Posterior vena cava (tissue), 2 donors: ENCODE measurements at regions of chr7 and their contacts with region 1.

Region 1: GRCh38 chr7:92149736-92150239 is 15.5 kb upstream of the CYP51A1 start:
- DNase-seq: no peak

Region 2: DNA sequence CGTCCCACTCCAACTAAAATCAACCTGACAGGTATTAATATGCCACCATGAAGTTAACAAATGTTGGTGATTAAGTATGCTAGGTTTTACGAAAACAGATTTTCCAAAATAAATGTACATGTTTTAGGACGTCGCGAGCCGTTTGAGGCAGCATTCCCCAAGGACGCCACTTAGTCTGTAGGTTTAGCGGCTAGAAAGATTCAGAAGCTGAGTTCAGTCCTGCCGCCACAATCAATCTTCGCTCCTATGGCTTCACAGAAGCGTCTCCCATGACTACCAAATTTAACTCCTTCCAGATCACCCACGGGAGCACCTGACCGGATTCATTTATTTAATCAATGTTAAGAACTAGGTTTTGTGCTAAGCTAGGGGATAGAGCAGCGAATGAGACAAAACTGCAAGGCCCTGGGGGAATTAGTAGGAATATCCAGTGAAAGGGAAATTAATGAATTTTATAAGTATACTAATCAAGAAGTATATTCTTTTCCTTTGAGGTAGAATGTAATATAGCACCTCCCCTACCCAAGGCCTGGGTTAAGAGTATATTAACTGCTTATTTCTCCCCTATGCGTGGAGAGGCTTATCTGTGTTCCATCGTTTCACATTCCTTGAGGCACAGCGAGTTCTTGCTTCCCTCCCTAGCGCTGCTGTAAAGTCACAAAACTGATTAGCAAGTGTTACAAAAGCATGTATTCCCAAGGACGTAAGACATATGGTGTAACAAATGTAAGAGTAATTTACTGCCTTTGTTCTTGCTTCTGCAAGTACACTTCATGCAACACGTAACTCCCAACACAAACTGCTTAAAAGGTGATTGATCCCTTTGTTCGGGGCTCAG is 14.5 kb before region 1 on chr7:
- intact Hi-C with region 1: loop called in 1 of 2 experiments (anchors 1 kb)
- DNase-seq: no peak